ENCODE measurements at regions of chr1 and their contacts with region 1.

Region 1: DNA sequence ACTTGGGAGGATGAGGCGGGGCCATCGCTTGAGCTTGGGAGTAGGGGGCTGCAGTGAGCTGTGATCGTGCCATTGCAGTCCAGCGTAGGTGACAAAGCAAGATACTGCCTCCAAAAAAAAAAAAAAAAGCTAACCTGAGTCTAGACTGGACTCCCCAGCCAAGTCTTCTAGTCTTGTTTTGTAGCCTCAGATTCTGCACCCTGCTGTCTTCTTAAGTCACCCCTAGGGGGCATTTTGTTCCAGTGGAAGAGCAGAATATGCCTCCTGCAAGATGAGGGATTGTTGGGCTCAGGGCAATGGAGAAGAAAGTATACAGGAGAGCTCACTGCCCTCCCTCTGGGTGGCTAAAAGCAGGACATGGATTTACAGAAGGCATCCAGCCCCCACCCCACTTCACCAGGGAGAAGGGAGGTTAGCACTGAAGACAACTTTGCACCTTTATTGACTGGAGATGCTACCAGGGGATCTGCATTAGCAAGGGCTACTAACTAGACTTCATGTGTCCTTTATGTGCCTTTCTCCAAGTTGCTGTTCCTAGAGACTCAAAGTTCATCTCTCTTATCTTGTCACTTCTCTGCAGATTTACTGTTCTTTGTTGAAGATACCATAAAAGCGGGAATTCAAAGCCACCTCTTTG is 15.3 kb upstream of the RNF187 start:
- DNase-seq: no peak
- H3K4me3 ChIP-seq: no peak overlapping the region
- H3K27me3 ChIP-seq: peaks cover 21% of the 10 kb centered on the region
- CTCF ChIP-seq: peak; percentile 62

Region 2: GRCh38 chr1:227558732-227559262 is 913.1 kb before region 1 on chr1:
- CTCF ChIA-PET with region 1: no interaction called
- POLR2A ChIA-PET with region 1: no interaction called
- DNase-seq: no peak
- H3K4me3 ChIP-seq: no peak overlapping the region
- H3K27me3 ChIP-seq: peaks cover 4% of the 10 kb centered on the region
- CTCF ChIP-seq: no peak

Region 3: DNA sequence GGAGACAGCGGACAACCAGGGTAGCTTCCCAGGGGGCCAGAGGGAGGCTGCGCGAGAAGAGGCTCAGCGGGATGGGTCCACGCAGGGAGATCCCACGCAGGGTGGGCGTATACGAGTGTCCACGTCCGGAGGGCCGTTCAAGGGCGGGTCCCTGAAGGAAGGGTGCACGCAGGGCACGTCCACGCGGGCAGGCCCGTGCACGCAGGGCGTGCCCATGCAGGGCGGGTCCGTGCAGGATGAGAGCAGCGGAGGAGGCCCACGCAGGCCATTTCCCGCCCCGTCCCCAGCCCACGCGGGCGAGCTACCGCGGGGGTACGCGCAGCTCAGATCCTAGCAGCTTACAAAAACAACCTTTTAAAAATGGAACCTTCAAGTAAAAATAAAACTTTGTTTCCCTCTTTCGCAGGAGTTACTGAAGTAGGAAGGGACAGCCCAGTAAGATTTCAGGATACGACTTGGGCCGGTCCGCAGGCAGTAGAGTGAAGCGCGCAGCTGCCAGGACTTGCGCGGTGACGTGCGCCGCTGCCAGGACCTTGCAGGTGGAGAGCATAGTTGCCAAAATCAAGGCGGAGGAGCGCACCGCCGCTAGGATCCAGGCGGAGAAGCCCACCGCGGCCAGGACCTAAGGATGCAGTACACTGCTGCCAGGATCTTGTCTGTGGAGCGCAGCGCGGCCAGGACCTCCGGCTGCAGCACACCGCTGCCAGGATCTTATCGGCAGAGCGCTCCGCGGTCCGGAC is 14.9 kb after region 1 on chr1:
- CTCF ChIA-PET with region 1: interaction called, 15 read pairs
- POLR2A ChIA-PET with region 1: no interaction called
- DNase-seq: peak; percentile 54
- H3K4me3 ChIP-seq: peak overlapping the region; percentile 68
- H3K27me3 ChIP-seq: 0 out of 2 replicates have a peak, but pooled peaks cover 1% of the 10 kb centered on the region
- CTCF ChIP-seq: no peak